Activated T-helper 1 cell treated with anti-CD3 and anti-CD28 coated beads, Interleukin-12 subunit alpha, Interleukin-12 subunit beta, Interleukin-2, Interleukin-4 antibody, amounts not matched to agents 30 ng/mL and 10 ng/mL and 1 ng/mL, durations not matched to agents 14 hours and 24 hours and 36 hours (primary cell): ENCODE measurements at regions of chr22 and their contacts with region 1.

Region 1: DNA sequence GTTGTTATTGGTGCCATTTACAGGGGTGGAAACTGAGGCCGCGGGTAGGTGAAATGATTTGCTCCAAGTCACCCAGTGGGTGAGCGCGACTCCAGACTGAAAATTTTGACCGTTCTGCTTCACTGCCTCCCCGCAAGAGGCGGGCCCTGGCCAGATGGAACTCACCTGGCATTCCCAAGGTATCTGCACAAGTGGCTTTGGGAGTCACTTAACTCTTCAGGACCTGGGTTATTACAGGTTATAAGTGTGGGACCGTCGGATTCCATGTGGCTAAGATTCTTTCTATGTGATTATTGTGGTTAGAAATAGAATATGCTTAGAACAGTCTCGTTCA is 598 bp downstream of the CABIN1 start:
- DNase-seq: no peak
- H3K4me3 Mint-ChIP-seq: peak overlapping the region; percentile 92
- H3K27ac Mint-ChIP-seq: peak overlapping the region; percentile 98
- H3K4me1 Mint-ChIP-seq: peaks cover 35% of the 10 kb centered on the region
- H3K27me3 Mint-ChIP-seq: no peaks in the 10 kb centered on the region

Region 2: GRCh38 chr22:24133187-24133965 is 121.7 kb after region 1 on chr22:
- intact Hi-C with region 1: no loop called
- DNase-seq: no peak
- H3K4me3 Mint-ChIP-seq: no peak overlapping the region
- H3K27ac Mint-ChIP-seq: peak overlapping the region; percentile 50
- H3K4me1 Mint-ChIP-seq: peaks cover 18% of the 10 kb centered on the region
- H3K27me3 Mint-ChIP-seq: no peaks in the 10 kb centered on the region

Region 3: GRCh38 chr22:24270638-24271408 is 259.1 kb after region 1 on chr22 and contains the start of gene SPECC1L:
- intact Hi-C with region 1: loop called (anchors 10 kb)
- DNase-seq: peak; percentile 92
- H3K4me3 Mint-ChIP-seq: peak within 1 kb of the TSS; percentile 85
- H3K27ac Mint-ChIP-seq: peak within 1 kb of the TSS; percentile 82
- H3K4me1 Mint-ChIP-seq: peaks cover 35% of the 10 kb centered on the region
- H3K27me3 Mint-ChIP-seq: no peaks in the 10 kb centered on the region
- total RNA-seq, gene SPECC1L: 40.3 and 40.4 TPM in 2 replicates